Activated CD4-positive, alpha-beta memory T cell treated with anti-CD3 and anti-CD28 coated beads for 36 hours (primary cell): ENCODE measurements at regions of chrX and their contacts with region 1.

Region 1: GRCh38 chrX:30889147-30890140 is at the start of gene TAB3:
- DNase-seq: peak; percentile 95
- H3K4me3 Mint-ChIP-seq: peak within 1 kb of the TSS; percentile 82
- H3K27ac Mint-ChIP-seq: peak within 1 kb of the TSS; percentile 90
- H3K4me1 Mint-ChIP-seq: peaks cover 35% of the 10 kb centered on the region
- H3K27me3 Mint-ChIP-seq: no peaks in the 10 kb centered on the region
- total RNA-seq, gene TAB3: 19.6 to 24.2 TPM

Region 2: GRCh38 chrX:30652527-30653414 is 236.7 kb before region 1 on chrX:
- CTCF ChIA-PET with region 1: no interaction called
- POLR2A ChIA-PET with region 1: no interaction called
- intact Hi-C with region 1: loop called (anchors 2 kb)
- DNase-seq: peak; percentile 95
- H3K4me3 Mint-ChIP-seq: peak overlapping the region; percentile 88
- H3K27ac Mint-ChIP-seq: peak overlapping the region; percentile 92
- H3K4me1 Mint-ChIP-seq: peaks cover 43% of the 10 kb centered on the region
- H3K27me3 Mint-ChIP-seq: no peaks in the 10 kb centered on the region

Region 3: GRCh38 chrX:30781711-30782444 is 107.6 kb before region 1 on chrX:
- CTCF ChIA-PET with region 1: interaction called, 3 read pairs
- POLR2A ChIA-PET with region 1: no interaction called
- intact Hi-C with region 1: loop called (anchors 5 kb)
- DNase-seq: no peak
- H3K4me3 Mint-ChIP-seq: no peak overlapping the region
- H3K27ac Mint-ChIP-seq: no peak overlapping the region
- H3K4me1 Mint-ChIP-seq: peaks cover 15% of the 10 kb centered on the region
- H3K27me3 Mint-ChIP-seq: peaks cover 11% of the 10 kb centered on the region

Region 4: DNA sequence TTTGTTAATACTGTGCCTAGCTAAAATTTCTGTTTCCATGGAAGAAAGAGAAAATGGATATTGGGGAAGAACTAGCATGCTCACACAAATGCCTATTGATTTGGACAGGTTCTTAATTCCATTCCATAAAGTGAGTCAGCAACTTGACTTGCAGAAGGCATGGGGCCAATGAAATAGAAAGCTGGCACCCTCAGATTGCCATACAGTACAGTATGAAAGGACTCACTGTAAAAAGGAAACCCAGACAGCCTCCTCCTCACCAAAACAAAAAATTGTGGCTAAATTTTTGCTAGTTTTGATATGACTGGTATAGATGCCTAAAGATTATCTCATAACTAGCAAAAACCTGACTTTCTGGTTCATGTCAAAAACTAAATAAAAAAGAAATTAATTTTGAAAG is 10.8 kb after region 1 on chrX:
- CTCF ChIA-PET with region 1: interaction called, 3 read pairs
- POLR2A ChIA-PET with region 1: interaction called, 5 read pairs
- intact Hi-C with region 1: loop called (anchors 1 kb)
- DNase-seq: peak; percentile 17
- H3K4me3 Mint-ChIP-seq: no peak overlapping the region
- H3K27ac Mint-ChIP-seq: no peak overlapping the region
- H3K4me1 Mint-ChIP-seq: peaks cover 3% of the 10 kb centered on the region
- H3K27me3 Mint-ChIP-seq: peaks cover 6% of the 10 kb centered on the region

Region 5: DNA sequence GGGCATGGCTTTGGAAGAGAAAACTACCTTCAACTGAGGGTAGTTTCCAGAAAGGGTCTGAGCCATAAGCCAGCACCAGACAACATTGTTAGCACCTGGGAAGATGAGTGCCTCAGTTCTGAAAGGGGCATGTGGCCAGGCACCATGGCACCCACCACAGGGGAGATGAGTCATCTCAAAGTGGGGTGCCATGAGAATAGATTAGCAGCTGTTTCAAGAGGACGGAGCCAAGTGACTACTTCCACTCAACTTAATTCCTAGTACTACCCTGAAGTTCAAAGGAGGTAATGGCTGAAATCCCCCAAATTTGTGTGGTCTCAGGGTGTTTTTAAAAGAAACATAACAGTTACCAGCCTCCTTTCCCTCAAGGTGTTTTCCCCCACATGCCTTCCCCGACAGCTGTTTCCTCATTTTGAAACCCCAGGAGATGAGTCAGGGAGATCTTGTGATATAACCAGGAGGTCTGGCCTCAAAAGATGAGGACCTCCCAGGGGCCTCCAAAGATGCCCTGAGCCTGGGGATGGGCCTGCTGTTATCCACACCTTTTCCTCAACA is 210.2 kb after region 1 on chrX:
- CTCF ChIA-PET with region 1: no interaction called
- POLR2A ChIA-PET with region 1: interaction called, 3 read pairs
- intact Hi-C with region 1: loop called (anchors 2 kb)
- DNase-seq: peak; percentile 73
- H3K4me3 Mint-ChIP-seq: no peak overlapping the region
- H3K27ac Mint-ChIP-seq: peak overlapping the region; percentile 51
- H3K4me1 Mint-ChIP-seq: peaks cover 5% of the 10 kb centered on the region
- H3K27me3 Mint-ChIP-seq: peaks cover 3% of the 10 kb centered on the region

Region 6: GRCh38 chrX:31112226-31112999 is 223.0 kb after region 1 on chrX:
- CTCF ChIA-PET with region 1: no interaction called
- POLR2A ChIA-PET with region 1: no interaction called
- intact Hi-C with region 1: no loop called
- DNase-seq: no peak
- H3K4me3 Mint-ChIP-seq: no peak overlapping the region
- H3K27ac Mint-ChIP-seq: no peak overlapping the region
- H3K4me1 Mint-ChIP-seq: no peaks in the 10 kb centered on the region
- H3K27me3 Mint-ChIP-seq: peaks cover 6% of the 10 kb centered on the region